Mammary epithelial cell (primary cell): ENCODE measurements at regions of chr10 and their contacts with region 1.

Region 1: GRCh38 chr10:121608469-121609190 is 10.4 kb upstream of the FGFR2 start:
- DNase-seq: peak; percentile 49
- H3K4me3 ChIP-seq: peak overlapping the region in 2 of 3 experiments; percentile 21 to 33
- H3K27ac ChIP-seq: no peak overlapping the region
- H3K4me1 ChIP-seq: peaks cover 25% of the 10 kb centered on the region
- H3K27me3 ChIP-seq: no peaks in the 10 kb centered on the region
- CTCF ChIP-seq: peak; percentile 61 to 78

Region 2: DNA sequence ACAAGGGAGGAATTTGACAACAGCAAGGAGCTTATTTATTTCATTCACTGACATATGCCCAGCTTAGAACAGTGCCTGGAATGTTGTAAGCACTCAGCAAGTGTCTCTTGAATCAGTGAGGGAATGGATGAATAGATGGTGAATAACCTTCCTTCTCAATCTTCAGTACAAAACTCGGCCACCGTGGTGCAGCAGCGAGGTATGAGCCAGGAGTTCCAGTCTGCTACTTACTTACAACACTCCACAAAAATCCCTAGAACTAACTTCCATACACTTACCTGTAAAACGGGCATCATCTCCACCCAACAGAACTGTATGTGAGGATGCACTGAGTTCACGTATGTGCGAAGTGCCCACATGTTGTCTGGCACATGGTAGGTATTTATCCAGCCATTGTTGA is 520.1 kb before region 1 on chr10:
- CTCF ChIA-PET with region 1: no interaction called
- dilution Hi-C with region 1: no loop called
- in situ Hi-C with region 1: no loop called
- intact Hi-C with region 1: loop called (anchors 1 kb)
- DNase-seq: peak; percentile 68
- H3K4me3 ChIP-seq: no peak overlapping the region
- H3K27ac ChIP-seq: no peak overlapping the region
- H3K4me1 ChIP-seq: peaks cover 12% of the 10 kb centered on the region
- H3K27me3 ChIP-seq: no peaks in the 10 kb centered on the region
- CTCF ChIP-seq: peak; percentile 67 to 75

Region 3: GRCh38 chr10:121168545-121169216 is 439.9 kb before region 1 on chr10:
- CTCF ChIA-PET with region 1: no interaction called
- dilution Hi-C with region 1: no loop called
- in situ Hi-C with region 1: no loop called
- intact Hi-C with region 1: loop called (anchors 1 kb)
- DNase-seq: no peak
- H3K4me3 ChIP-seq: no peak overlapping the region
- H3K27ac ChIP-seq: no peak overlapping the region
- H3K4me1 ChIP-seq: no peaks in the 10 kb centered on the region
- H3K27me3 ChIP-seq: no peaks in the 10 kb centered on the region
- CTCF ChIP-seq: peak in 1 of 2 donors; percentile 13

Region 4: DNA sequence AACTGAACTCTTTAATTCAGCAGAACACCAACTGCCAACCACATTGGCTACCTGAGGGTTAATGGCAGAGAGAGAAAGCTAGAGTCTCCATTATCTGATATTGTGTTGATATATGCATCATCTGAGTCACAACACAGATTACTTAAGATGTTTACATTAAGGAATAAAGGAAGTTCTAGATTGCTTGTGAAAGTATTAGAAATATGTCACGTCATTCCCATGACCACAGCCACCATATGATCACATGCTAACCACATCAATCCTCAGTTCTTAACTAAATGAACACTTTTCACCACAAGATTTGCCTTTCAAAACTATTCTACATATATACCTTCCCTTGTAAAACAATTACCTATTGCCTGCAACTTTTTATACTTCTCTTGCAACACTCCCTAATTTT is 348.3 kb before region 1 on chr10:
- CTCF ChIA-PET with region 1: interaction called, 14 read pairs
- dilution Hi-C with region 1: no loop called
- in situ Hi-C with region 1: no loop called
- intact Hi-C with region 1: no loop called
- DNase-seq: peak; percentile 65
- H3K4me3 ChIP-seq: no peak overlapping the region
- H3K27ac ChIP-seq: no peak overlapping the region
- H3K4me1 ChIP-seq: peaks cover 5% of the 10 kb centered on the region
- H3K27me3 ChIP-seq: no peaks in the 10 kb centered on the region
- CTCF ChIP-seq: no peak

Region 5: DNA sequence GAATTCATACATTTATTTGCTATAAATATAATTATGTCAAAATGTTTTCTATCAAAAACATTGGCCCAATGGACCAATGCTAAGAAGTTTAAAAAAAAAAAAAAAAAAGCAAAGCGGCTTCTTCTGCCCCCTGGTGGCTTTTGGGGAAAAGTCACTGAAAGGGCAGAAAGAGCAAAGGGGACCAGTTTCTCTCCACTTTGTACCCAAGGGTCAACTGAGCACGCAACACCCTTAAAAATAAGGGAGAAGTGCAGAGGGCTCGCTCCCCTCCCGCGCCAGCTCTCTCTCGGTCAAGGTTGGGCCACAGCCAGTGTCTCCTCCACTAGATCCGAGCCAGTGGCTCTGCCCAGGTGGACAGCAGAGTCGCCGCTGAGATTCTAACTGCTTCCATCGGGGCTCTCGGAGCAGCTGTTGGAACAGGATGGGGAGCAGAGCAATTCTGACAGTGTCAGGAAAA is 126.0 kb after region 1 on chr10:
- CTCF ChIA-PET with region 1: no interaction called
- dilution Hi-C with region 1: no loop called
- in situ Hi-C with region 1: no loop called
- intact Hi-C with region 1: loop called (anchors 1 kb)
- DNase-seq: peak; percentile 10
- H3K4me3 ChIP-seq: no peak overlapping the region
- H3K27ac ChIP-seq: no peak overlapping the region
- H3K4me1 ChIP-seq: no peaks in the 10 kb centered on the region
- H3K27me3 ChIP-seq: no peaks in the 10 kb centered on the region
- CTCF ChIP-seq: peak; percentile 58 to 75

Region 6: GRCh38 chr10:121886997-121887622 is 278.5 kb after region 1 on chr10:
- CTCF ChIA-PET with region 1: no interaction called
- dilution Hi-C with region 1: no loop called
- in situ Hi-C with region 1: loop called in 1 of 2 experiments (anchors 25 kb)
- intact Hi-C with region 1: loop called (anchors 5 kb)
- DNase-seq: peak; percentile 51
- H3K4me3 ChIP-seq: no peak overlapping the region
- H3K27ac ChIP-seq: no peak overlapping the region
- H3K4me1 ChIP-seq: no peaks in the 10 kb centered on the region
- H3K27me3 ChIP-seq: no peaks in the 10 kb centered on the region
- CTCF ChIP-seq: peak; percentile 96 to 98

Region 7: GRCh38 chr10:121900443-121901174 is 292.0 kb after region 1 on chr10:
- CTCF ChIA-PET with region 1: no interaction called
- dilution Hi-C with region 1: no loop called
- in situ Hi-C with region 1: loop called in 1 of 2 experiments (anchors 25 kb)
- intact Hi-C with region 1: loop called (anchors 5 kb)
- DNase-seq: peak; percentile 45
- H3K4me3 ChIP-seq: no peak overlapping the region
- H3K27ac ChIP-seq: no peak overlapping the region
- H3K4me1 ChIP-seq: no peaks in the 10 kb centered on the region
- H3K27me3 ChIP-seq: no peaks in the 10 kb centered on the region
- CTCF ChIP-seq: peak; percentile 68

Region 8: DNA sequence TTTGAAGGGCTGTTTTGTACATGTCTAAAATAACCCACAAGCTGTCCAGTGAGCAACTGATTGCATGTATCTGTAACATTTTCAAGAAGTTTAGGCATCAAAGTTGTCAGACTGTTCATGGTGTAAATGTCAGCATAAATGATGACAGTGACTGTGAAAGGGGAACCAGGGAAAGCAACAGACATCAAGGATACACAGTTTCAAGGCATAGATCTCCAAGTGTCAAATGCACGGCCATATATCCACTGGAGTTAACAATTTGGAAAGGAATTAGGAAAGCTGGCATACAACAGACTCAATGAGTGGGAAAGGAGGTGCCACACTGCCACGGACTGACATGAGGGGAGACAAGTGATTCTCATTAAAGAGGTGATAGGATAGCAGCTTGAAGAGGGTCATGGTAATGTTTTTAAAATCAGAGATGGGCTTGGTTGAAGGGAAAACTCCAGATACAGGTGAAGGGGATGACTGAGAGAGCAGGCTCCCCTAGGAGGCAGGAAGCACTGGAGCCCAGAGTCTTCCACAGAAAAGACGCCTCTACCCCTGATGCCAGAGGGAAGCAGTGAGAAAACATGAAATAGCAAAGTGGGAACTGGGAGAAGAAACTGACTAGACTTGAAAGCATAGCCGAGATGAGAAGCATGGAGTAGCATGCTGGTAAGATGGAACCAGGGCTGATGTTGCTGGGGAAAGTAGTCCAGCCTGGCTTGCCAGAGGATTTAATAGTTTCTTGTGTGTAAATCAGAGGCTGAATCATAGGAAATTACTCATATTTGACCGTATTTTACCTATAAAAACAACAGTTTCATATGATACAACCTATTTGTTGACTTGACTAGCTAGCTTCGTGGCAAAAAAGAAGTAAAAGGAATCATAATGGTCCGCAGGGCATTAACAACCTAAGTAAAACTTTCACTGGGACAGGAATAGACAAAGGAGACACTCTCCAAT is 347.8 kb after region 1 on chr10:
- CTCF ChIA-PET with region 1: no interaction called
- dilution Hi-C with region 1: no loop called
- in situ Hi-C with region 1: no loop called
- intact Hi-C with region 1: no loop called
- DNase-seq: peak; percentile 76
- H3K4me3 ChIP-seq: no peak overlapping the region
- H3K27ac ChIP-seq: no peak overlapping the region
- H3K4me1 ChIP-seq: peaks cover 8% of the 10 kb centered on the region
- H3K27me3 ChIP-seq: no peaks in the 10 kb centered on the region
- CTCF ChIP-seq: no peak